Posterior vena cava (tissue), 2 donors: ENCODE measurements at regions of chr16 and their contacts with region 1.

Region 1: GRCh38 chr16:51306116-51306515 is 155.0 kb upstream of the SALL1 start:
- DNase-seq: no peak

Region 2: GRCh38 chr16:50634947-50635346 is 671.2 kb before region 1 on chr16:
- intact Hi-C with region 1: loop called in 1 of 2 experiments (anchors 5 kb)
- DNase-seq: no peak

Region 3: GRCh38 chr16:51382215-51382614 is 76.1 kb after region 1 on chr16:
- intact Hi-C with region 1: no loop called
- DNase-seq: no peak